CD4-positive, alpha-beta T cell (primary cell): ENCODE measurements at regions of chr2 and their contacts with region 1.

Region 1: DNA sequence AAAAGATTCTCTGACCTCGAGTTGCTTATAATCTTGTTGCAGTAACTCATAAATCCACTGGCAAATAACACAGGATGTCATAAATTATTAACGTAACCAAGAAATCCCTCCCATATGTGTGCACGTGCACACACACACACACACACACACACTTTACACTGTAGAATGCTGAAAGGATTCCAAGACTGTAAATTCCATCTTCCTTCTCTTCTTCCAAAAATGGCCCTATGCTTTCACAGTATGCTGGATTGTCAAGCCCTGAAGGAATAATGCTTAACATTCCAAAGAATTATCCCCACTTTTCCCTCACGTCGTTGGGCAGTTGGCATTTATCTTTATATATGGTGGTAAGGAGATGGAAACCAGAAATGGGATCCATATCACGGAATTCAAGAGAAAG is 117.5 kb upstream of the CRIM1 start:
- DNase-seq: no peak
- ATAC-seq: no peak
- H3K4me3 ChIP-seq: no peak overlapping the region
- H3K4me3 Mint-ChIP-seq: no peak overlapping the region
- H3K27ac ChIP-seq: no peak overlapping the region
- H3K27ac Mint-ChIP-seq: no peak overlapping the region
- H3K4me1 ChIP-seq: peaks cover 26% of the 10 kb centered on the region
- H3K4me1 Mint-ChIP-seq: peaks cover 36% of the 10 kb centered on the region
- H3K27me3 ChIP-seq: no peaks in the 10 kb centered on the region
- H3K27me3 Mint-ChIP-seq: no peaks in the 10 kb centered on the region
- CTCF ChIP-seq: no peak

Region 2: GRCh38 chr2:36185624-36186023 is 52.5 kb before region 1 on chr2:
- CTCF ChIA-PET with region 1: no interaction called
- POLR2A ChIA-PET with region 1: no interaction called
- intact Hi-C with region 1: no loop called
- DNase-seq: no peak
- ATAC-seq: no peak
- H3K4me3 ChIP-seq: no peak overlapping the region
- H3K4me3 Mint-ChIP-seq: no peak overlapping the region
- H3K27ac ChIP-seq: no peak overlapping the region
- H3K27ac Mint-ChIP-seq: no peak overlapping the region
- H3K4me1 ChIP-seq: no peaks in the 10 kb centered on the region
- H3K4me1 Mint-ChIP-seq: no peaks in the 10 kb centered on the region
- H3K27me3 ChIP-seq: no peaks in the 10 kb centered on the region
- H3K27me3 Mint-ChIP-seq: no peaks in the 10 kb centered on the region
- CTCF ChIP-seq: no peak

Region 3: DNA sequence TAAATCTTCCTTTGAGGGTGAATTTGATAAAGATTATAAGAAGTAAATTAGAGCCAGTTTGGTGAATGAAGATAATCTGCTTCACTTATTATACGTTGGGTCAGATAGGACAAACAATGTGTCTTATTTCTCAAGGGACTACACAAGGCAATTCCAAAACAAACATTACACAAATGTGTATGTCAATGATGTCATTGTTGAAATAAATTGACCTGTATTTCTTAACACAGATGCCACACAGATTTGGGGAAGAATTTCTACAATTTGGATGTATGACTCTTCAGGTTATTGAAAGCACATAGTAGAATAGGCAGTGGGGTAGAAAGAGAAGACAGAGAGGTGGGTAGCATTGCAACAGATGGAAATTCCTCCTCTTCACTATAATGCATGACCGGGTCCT is 110.6 kb after region 1 on chr2:
- CTCF ChIA-PET with region 1: no interaction called
- POLR2A ChIA-PET with region 1: no interaction called
- intact Hi-C with region 1: loop called in 1 of 2 experiments (anchors 2 kb)
- DNase-seq: no peak
- ATAC-seq: no peak
- H3K4me3 ChIP-seq: no peak overlapping the region
- H3K4me3 Mint-ChIP-seq: no peak overlapping the region
- H3K27ac ChIP-seq: no peak overlapping the region
- H3K27ac Mint-ChIP-seq: no peak overlapping the region
- H3K4me1 ChIP-seq: no peaks in the 10 kb centered on the region
- H3K4me1 Mint-ChIP-seq: no peaks in the 10 kb centered on the region
- H3K27me3 ChIP-seq: no peaks in the 10 kb centered on the region
- H3K27me3 Mint-ChIP-seq: no peaks in the 10 kb centered on the region
- CTCF ChIP-seq: no peak